GM23248 (cell line): ENCODE measurements at regions of chr15 and their contacts with region 1.

Region 1: GRCh38 chr15:35289024-35289617 is 204.0 kb upstream of the NANOGP8 start:
- DNase-seq: peak; percentile 77
- H3K4me3 ChIP-seq: no peak overlapping the region
- H3K27ac ChIP-seq: no peak overlapping the region
- H3K4me1 ChIP-seq: peaks cover 14% of the 10 kb centered on the region
- H3K27me3 ChIP-seq: no peaks in the 10 kb centered on the region

Region 2: GRCh38 chr15:35078221-35078915 is 210.8 kb before region 1 on chr15:
- in situ Hi-C with region 1: loop called (anchors 10 kb)
- DNase-seq: peak; percentile 72
- H3K4me3 ChIP-seq: no peak overlapping the region
- H3K27ac ChIP-seq: no peak overlapping the region
- H3K4me1 ChIP-seq: no peaks in the 10 kb centered on the region
- H3K27me3 ChIP-seq: no peaks in the 10 kb centered on the region

Region 3: GRCh38 chr15:35444557-35445204 is 155.6 kb after region 1 on chr15:
- in situ Hi-C with region 1: loop called (anchors 10 kb)
- DNase-seq: peak; percentile 67
- H3K4me3 ChIP-seq: no peak overlapping the region
- H3K27ac ChIP-seq: no peak overlapping the region
- H3K4me1 ChIP-seq: peaks cover 23% of the 10 kb centered on the region
- H3K27me3 ChIP-seq: no peaks in the 10 kb centered on the region

Region 4: GRCh38 chr15:35740761-35741160 is 451.6 kb after region 1 on chr15:
- in situ Hi-C with region 1: loop called (anchors 25 kb)
- DNase-seq: peak; percentile 52
- H3K4me3 ChIP-seq: no peak overlapping the region
- H3K27ac ChIP-seq: no peak overlapping the region
- H3K4me1 ChIP-seq: peaks cover 19% of the 10 kb centered on the region
- H3K27me3 ChIP-seq: no peaks in the 10 kb centered on the region

Region 5: DNA sequence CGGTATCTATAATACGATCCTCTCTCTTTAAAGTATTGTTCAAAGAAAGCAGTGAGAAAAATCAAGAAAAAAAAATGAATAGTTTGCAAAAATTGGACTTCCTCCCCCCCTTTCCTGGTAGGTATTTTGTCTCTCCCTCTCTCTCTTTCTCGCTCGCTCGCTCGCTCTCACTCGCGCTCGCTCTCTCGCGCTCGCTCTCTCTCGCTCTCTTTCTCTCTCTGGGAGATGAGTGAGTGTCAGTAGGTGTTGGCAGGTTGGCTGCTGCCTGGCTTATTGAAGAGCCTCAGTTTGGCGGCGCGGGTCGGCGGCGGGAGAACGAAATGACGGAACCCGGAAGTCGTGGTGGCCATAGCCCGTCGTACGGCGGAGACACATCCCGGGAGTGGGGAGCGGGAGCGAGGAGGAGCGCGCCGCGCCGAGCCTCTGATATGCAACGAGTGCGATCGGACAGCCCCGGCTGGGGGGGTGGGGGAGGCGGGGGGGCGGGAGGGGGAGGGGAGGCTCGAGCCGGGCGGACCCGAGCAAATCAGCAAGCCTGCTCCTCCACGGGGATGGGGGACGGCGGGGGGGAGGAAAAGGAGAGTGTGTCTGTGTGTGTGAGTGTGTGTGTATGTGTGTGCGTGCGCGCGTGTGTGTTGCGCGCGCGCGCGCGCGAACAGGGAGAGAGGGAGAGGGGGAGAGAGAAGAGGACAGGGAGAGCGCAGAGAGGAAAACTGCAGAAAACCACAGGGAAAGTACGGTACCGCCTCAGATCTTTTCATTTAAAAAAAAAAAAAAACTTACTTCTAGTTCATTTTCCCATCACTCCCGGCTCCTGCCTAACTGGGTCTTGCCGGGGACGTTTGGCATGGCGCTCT is 1811.2 kb after region 1 on chr15 and contains the start of gene MEIS2:
- in situ Hi-C with region 1: loop called (anchors 25 kb)
- DNase-seq: peak; percentile 95
- H3K4me3 ChIP-seq: peak within 1 kb of the TSS; percentile 95
- H3K27ac ChIP-seq: peak within 1 kb of the TSS; percentile 92
- H3K4me1 ChIP-seq: peaks cover 9% of the 10 kb centered on the region; the same call in 1 of the 2 replicates
- H3K27me3 ChIP-seq: no peaks in the 10 kb centered on the region
- total RNA-seq, gene MEIS2: 23.7 and 29.3 TPM in 2 replicates